ENCODE measurements at regions of chr6 and their contacts with region 1.

Region 1: DNA sequence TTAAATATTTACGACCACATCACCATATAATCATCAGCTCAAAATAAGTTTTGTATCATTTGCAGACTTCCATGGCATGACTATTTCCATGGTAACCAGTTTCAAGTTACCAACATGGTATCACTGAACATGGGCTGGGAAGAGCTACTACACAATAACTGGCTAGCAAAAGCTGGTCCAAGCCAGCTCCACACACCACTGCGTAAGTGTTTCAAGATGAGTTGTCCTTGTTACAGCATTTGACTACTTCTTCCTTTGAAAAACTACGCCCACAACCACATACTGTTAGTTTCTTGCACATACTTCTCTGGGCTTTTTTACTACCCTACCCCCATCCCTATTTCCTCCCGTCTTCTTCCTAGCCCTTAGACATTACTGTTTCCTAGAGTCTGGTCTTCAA is 8.5 kb downstream of the CD164 start:
- DNase-seq: peak; percentile 64
- H3K4me3 Mint-ChIP-seq: peak overlapping the region; percentile 54
- H3K27ac Mint-ChIP-seq: peak overlapping the region; percentile 89
- H3K4me1 Mint-ChIP-seq: peaks cover 78% of the 10 kb centered on the region
- H3K27me3 Mint-ChIP-seq: no peaks in the 10 kb centered on the region

Region 2: GRCh38 chr6:109187399-109188114 is 186.2 kb before region 1 on chr6:
- CTCF ChIA-PET with region 1: interaction called, 10 read pairs
- POLR2A ChIA-PET with region 1: interaction called, 8 read pairs
- DNase-seq: peak; percentile 64
- H3K4me3 Mint-ChIP-seq: no peak overlapping the region
- H3K27ac Mint-ChIP-seq: no peak overlapping the region
- H3K4me1 Mint-ChIP-seq: peaks cover 1% of the 10 kb centered on the region
- H3K27me3 Mint-ChIP-seq: peaks cover 43% of the 10 kb centered on the region

Region 3: GRCh38 chr6:109362102-109362884 is 11.5 kb before region 1 on chr6:
- CTCF ChIA-PET with region 1: no interaction called
- POLR2A ChIA-PET with region 1: interaction called, 35 read pairs
- DNase-seq: no peak
- H3K4me3 Mint-ChIP-seq: no peak overlapping the region
- H3K27ac Mint-ChIP-seq: no peak overlapping the region
- H3K4me1 Mint-ChIP-seq: peaks cover 29% of the 10 kb centered on the region
- H3K27me3 Mint-ChIP-seq: no peaks in the 10 kb centered on the region